SK-N-SH (cell line): ENCODE measurements at regions of chr18 and their contacts with region 1.

Region 1: GRCh38 chr18:30971338-30971956 is 71.1 kb downstream of the DSC3 start:
- DNase-seq: peak; percentile 14
- H3K4me3 ChIP-seq: no peak overlapping the region
- H3K27ac ChIP-seq: no peak overlapping the region
- H3K4me1 ChIP-seq: no peaks in the 10 kb centered on the region
- H3K27me3 ChIP-seq: no peaks in the 10 kb centered on the region
- CTCF ChIP-seq: peak; percentile 77
- EP300 ChIP-seq: no peak
- RAD21 ChIP-seq: peak; percentile 53

Region 2: GRCh38 chr18:30618567-30618966 is 352.9 kb before region 1 on chr18:
- CTCF ChIA-PET with region 1: no interaction called
- POLR2A ChIA-PET with region 1: no interaction called
- DNase-seq: no peak
- H3K4me3 ChIP-seq: no peak overlapping the region
- H3K27ac ChIP-seq: no peak overlapping the region
- H3K4me1 ChIP-seq: no peaks in the 10 kb centered on the region
- H3K27me3 ChIP-seq: no peaks in the 10 kb centered on the region
- CTCF ChIP-seq: no peak
- EP300 ChIP-seq: no peak
- RAD21 ChIP-seq: no peak

Region 3: GRCh38 chr18:30982285-30982992 is 11.0 kb after region 1 on chr18:
- CTCF ChIA-PET with region 1: interaction called, 10 read pairs
- POLR2A ChIA-PET with region 1: no interaction called
- DNase-seq: no peak
- H3K4me3 ChIP-seq: no peak overlapping the region
- H3K27ac ChIP-seq: no peak overlapping the region
- H3K4me1 ChIP-seq: no peaks in the 10 kb centered on the region
- H3K27me3 ChIP-seq: no peaks in the 10 kb centered on the region
- CTCF ChIP-seq: no peak
- EP300 ChIP-seq: no peak
- RAD21 ChIP-seq: no peak

Region 4: DNA sequence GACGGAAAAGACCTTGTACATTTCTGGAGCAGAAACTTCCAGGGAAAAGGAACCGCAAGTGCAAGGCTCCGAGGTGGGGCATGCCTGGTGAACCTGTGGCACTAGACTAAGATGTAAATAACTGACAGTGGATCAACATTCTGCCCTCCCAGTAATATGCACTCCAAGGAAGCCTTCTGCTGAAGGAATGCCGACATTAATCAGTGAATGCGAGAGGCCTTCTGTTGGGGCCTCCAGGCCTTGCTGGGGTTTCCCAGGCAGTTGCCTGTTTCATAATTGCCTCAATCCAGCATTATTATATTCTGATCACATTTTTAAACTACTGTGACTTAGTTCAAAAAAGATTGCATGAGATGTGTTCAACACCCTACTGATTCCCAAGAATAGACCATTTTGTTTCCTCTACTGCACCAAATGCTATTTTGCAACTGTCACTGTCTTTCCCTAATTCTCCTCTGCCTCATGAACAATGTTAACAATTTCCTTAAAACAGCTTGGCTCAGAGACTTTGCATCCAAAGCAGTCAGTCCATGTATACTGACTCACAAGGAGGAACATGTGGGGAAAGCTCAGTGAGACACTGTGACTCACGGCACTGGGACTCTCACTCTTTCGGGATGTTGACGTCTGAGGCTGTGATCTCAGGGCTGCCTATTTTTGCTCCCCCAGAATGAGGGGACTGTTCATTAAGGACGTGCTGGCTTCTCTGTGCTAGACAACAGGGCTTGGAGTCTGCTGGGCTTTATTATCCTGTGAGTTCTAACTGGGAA is 516.0 kb after region 1 on chr18:
- CTCF ChIA-PET with region 1: no interaction called
- POLR2A ChIA-PET with region 1: no interaction called
- DNase-seq: no peak
- H3K4me3 ChIP-seq: no peak overlapping the region
- H3K27ac ChIP-seq: no peak overlapping the region
- H3K4me1 ChIP-seq: no peaks in the 10 kb centered on the region
- H3K27me3 ChIP-seq: peaks cover 13% of the 10 kb centered on the region
- CTCF ChIP-seq: no peak
- EP300 ChIP-seq: no peak
- RAD21 ChIP-seq: no peak